ENCODE measurements at regions of chr3 and their contacts with region 1.

Region 1: GRCh38 chr3:144556392-144556791 is 584.8 kb downstream of the DIPK2A start:
- DNase-seq: peak; percentile 3
- ATAC-seq: no peak
- H3K4me3 ChIP-seq: no peak overlapping the region
- H3K27ac ChIP-seq: no peak overlapping the region
- H3K4me1 ChIP-seq: no peaks in the 10 kb centered on the region; the same call in 1 of the 2 replicates
- H3K27me3 ChIP-seq: no peaks in the 10 kb centered on the region
- CTCF ChIP-seq: no peak

Region 2: DNA sequence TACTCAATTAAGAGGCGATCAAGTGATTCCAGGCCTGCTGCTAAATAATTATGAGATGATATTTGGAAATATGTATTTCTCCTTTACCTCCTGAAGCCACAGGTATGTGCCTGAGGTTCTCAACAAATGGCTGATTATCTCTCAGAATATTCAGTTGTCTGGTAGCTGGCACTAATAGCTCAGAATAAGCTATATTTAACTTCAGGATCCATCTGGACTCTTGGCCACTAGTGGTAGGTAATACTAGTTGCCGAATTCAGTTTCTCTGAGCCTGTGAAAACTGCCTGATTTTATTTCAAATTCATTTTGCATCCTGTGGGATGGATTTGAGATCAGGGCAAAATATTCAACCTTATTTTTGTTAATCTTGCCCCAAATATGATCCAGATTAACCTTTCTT is 85.7 kb before region 1 on chr3:
- CTCF ChIA-PET with region 1: no interaction called
- POLR2A ChIA-PET with region 1: no interaction called
- intact Hi-C with region 1: loop called (anchors 10 kb)
- DNase-seq: no peak
- ATAC-seq: no peak
- H3K4me3 ChIP-seq: no peak overlapping the region
- H3K27ac ChIP-seq: no peak overlapping the region
- H3K4me1 ChIP-seq: no peaks in the 10 kb centered on the region
- H3K27me3 ChIP-seq: no peaks in the 10 kb centered on the region
- CTCF ChIP-seq: no peak

Region 3: DNA sequence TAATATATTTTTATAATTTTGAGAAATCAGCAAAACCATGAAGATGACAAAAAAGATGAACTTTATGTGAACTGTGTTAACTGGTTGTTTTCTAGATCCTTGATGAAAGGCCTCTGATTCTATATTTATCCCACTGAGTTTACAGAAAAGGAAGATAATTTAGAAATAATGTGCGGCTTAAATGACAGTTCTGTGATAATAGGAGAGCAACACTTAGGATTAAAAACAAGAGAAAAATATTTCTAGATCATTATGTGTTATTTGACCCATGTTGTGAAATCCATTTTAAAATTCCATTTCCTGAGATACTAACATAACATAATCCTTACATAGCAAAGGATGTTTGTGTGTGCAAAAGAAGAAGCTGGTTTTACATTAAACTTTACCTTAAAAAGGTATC is 13.3 kb after region 1 on chr3:
- CTCF ChIA-PET with region 1: no interaction called
- POLR2A ChIA-PET with region 1: no interaction called
- intact Hi-C with region 1: no loop called
- DNase-seq: no peak
- ATAC-seq: no peak
- H3K4me3 ChIP-seq: no peak overlapping the region
- H3K27ac ChIP-seq: no peak overlapping the region
- H3K4me1 ChIP-seq: peaks cover 12% of the 10 kb centered on the region
- H3K27me3 ChIP-seq: no peaks in the 10 kb centered on the region
- CTCF ChIP-seq: no peak

Region 4: DNA sequence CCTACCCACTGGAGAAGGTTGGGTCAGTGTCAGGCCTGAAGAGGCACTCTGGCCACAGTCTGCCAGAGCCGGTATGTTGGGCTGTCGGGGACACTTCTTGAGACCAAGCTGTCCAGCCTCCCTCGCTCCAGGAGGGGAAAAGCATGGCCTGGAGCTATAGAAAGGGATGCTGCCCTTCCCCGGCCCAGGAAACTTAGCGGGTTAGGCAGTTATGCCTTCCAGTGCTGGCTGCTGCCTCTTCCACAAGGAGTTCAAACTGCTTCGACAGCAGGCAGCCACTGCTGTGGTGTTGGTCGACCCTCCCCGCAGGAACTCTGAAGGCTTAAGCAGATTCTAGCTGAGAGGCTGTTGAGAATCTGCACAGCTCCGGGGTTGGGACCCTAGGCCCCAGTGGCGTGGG is 234.6 kb after region 1 on chr3:
- CTCF ChIA-PET with region 1: no interaction called
- POLR2A ChIA-PET with region 1: no interaction called
- intact Hi-C with region 1: no loop called
- DNase-seq: no peak
- ATAC-seq: no peak
- H3K4me3 ChIP-seq: no peak overlapping the region
- H3K27ac ChIP-seq: no peak overlapping the region
- H3K4me1 ChIP-seq: no peaks in the 10 kb centered on the region
- H3K27me3 ChIP-seq: no peaks in the 10 kb centered on the region
- CTCF ChIP-seq: no peak